Adrenal gland (tissue), 19 donors: ENCODE measurements at regions of chr6 and their contacts with region 1.

Region 1: GRCh38 chr6:24283043-24283985 is 74.5 kb downstream of the DCDC2 start:
- DNase-seq: peak; percentile 59 to 81 (median 74)
- H3K4me3 ChIP-seq: peak overlapping the region in 1 of 4 donors; percentile 40
- H3K27ac ChIP-seq: no peak overlapping the region
- H3K4me1 ChIP-seq: peaks cover 0 to 9% of the 10 kb centered on the region in 2 donors
- H3K27me3 ChIP-seq: no peaks in the 10 kb centered on the region
- CTCF ChIP-seq: peak; percentile 34 to 73 (median 62)
- POLR2A ChIP-seq: no peak

Region 2: DNA sequence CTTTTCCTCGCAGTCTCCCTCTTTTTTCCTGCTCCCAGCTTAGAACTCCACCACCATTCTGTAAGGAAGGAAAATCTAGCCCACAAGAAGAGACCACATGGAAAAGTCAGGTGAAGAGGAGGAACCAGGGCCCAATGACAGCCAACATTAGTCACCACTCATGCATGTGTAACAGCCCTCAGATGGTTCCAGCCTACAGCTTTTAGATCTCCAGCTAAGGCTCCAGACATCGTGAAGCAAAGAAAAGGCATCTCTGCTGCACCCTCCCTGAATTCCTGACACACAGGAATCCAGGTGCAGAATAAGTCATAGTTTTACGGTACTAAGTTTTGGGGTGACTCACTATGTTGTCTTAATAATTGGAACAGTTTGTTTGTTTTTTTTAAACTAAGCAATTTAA is 49.0 kb after region 1 on chr6:
- intact Hi-C with region 1: no loop called
- DNase-seq: no peak
- H3K4me3 ChIP-seq: no peak overlapping the region
- H3K27ac ChIP-seq: no peak overlapping the region
- H3K4me1 ChIP-seq: no peaks in the 10 kb centered on the region
- H3K27me3 ChIP-seq: no peaks in the 10 kb centered on the region
- CTCF ChIP-seq: no peak
- POLR2A ChIP-seq: no peak

Region 3: GRCh38 chr6:24385536-24386269 is 102.4 kb after region 1 on chr6:
- intact Hi-C with region 1: loop called (anchors 5 to 10 kb)
- DNase-seq: no peak
- H3K4me3 ChIP-seq: no peak overlapping the region
- H3K27ac ChIP-seq: no peak overlapping the region
- H3K4me1 ChIP-seq: no peaks in the 10 kb centered on the region
- H3K27me3 ChIP-seq: no peaks in the 10 kb centered on the region
- CTCF ChIP-seq: no peak
- POLR2A ChIP-seq: no peak

Region 4: GRCh38 chr6:24394780-24395437 is 111.6 kb after region 1 on chr6:
- intact Hi-C with region 1: loop called in 1 of 2 experiments (anchors 10 kb)
- DNase-seq: no peak
- H3K4me3 ChIP-seq: no peak overlapping the region
- H3K27ac ChIP-seq: no peak overlapping the region
- H3K4me1 ChIP-seq: no peaks in the 10 kb centered on the region
- H3K27me3 ChIP-seq: peaks cover 8% of the 10 kb centered on the region
- CTCF ChIP-seq: no peak
- POLR2A ChIP-seq: no peak